Colonic mucosa (tissue), 4 donors: ENCODE measurements at regions of chr22 and their contacts with region 1.

Region 1: DNA sequence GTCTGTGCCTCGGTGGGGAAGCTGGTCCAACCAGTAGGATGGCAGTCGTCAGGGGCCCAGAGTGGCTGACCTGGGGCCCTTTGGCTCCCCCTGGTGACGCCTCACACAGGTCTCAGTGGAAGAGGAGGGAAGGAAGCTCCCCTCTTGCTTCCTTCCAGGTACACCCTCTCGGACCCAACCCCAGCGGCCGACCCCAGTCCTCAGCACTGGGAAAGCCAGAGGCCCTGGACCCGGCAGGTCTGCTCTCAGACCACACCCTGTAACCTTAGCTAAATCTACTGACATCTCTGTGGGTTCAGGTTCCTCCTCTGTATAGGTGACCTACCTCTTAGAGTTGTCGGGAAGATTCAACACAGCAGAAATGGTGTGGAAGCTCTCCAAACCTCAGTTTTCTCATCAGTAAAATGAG is 3.4 kb upstream of the SCUBE1 start:
- DNase-seq: peak; percentile 65
- H3K4me3 ChIP-seq: no peak overlapping the region
- H3K27ac ChIP-seq: no peak overlapping the region
- H3K4me1 ChIP-seq: no peaks in the 10 kb centered on the region
- H3K27me3 ChIP-seq: peaks cover 23% of the 10 kb centered on the region
- CTCF ChIP-seq: peak; percentile 55

Region 2: GRCh38 chr22:43230971-43231723 is 115.4 kb before region 1 on chr22:
- intact Hi-C with region 1: loop called (anchors 5 kb)
- DNase-seq: peak; percentile 55
- H3K4me3 ChIP-seq: no peak overlapping the region
- H3K27ac ChIP-seq: no peak overlapping the region
- H3K4me1 ChIP-seq: no peaks in the 10 kb centered on the region
- H3K27me3 ChIP-seq: no peaks in the 10 kb centered on the region
- CTCF ChIP-seq: peak; percentile 86

Region 3: GRCh38 chr22:43273902-43274484 is 72.5 kb before region 1 on chr22:
- intact Hi-C with region 1: loop called (anchors 2 kb)
- DNase-seq: no peak
- H3K4me3 ChIP-seq: no peak overlapping the region
- H3K27ac ChIP-seq: no peak overlapping the region
- H3K4me1 ChIP-seq: peaks cover 3% of the 10 kb centered on the region
- H3K27me3 ChIP-seq: no peaks in the 10 kb centered on the region
- CTCF ChIP-seq: peak; percentile 66

Region 4: DNA sequence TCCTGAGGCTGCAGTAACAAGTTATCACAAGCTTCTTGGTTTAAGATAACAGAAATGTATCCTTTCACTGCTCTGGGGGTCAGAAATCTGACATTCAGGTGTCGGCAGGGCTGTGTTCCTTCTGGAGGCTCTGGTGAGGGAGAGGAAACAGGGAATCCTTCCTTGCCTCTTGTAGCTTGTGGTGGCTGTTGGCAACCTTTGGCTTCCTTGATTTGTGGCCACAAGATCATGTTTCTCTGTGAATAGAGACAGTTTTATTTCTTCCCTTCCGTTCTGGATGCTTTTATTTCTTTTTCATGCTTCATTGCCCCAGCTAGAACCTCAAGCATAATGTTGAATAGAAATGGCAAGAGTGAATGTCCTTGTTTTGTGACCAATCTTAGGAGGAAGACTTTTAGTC is 109.3 kb after region 1 on chr22:
- intact Hi-C with region 1: no loop called
- DNase-seq: no peak
- H3K4me3 ChIP-seq: no peak overlapping the region
- H3K27ac ChIP-seq: no peak overlapping the region
- H3K4me1 ChIP-seq: no peaks in the 10 kb centered on the region
- H3K27me3 ChIP-seq: no peaks in the 10 kb centered on the region
- CTCF ChIP-seq: no peak